Activated CD8-positive, alpha-beta memory T cell treated with anti-CD3 and anti-CD28 coated beads, Interleukin-2, amount 10 ng/mL, durations not matched to agents 7 days and 5 days (primary cell): ENCODE measurements at regions of chr17 and their contacts with region 1.

Region 1: DNA sequence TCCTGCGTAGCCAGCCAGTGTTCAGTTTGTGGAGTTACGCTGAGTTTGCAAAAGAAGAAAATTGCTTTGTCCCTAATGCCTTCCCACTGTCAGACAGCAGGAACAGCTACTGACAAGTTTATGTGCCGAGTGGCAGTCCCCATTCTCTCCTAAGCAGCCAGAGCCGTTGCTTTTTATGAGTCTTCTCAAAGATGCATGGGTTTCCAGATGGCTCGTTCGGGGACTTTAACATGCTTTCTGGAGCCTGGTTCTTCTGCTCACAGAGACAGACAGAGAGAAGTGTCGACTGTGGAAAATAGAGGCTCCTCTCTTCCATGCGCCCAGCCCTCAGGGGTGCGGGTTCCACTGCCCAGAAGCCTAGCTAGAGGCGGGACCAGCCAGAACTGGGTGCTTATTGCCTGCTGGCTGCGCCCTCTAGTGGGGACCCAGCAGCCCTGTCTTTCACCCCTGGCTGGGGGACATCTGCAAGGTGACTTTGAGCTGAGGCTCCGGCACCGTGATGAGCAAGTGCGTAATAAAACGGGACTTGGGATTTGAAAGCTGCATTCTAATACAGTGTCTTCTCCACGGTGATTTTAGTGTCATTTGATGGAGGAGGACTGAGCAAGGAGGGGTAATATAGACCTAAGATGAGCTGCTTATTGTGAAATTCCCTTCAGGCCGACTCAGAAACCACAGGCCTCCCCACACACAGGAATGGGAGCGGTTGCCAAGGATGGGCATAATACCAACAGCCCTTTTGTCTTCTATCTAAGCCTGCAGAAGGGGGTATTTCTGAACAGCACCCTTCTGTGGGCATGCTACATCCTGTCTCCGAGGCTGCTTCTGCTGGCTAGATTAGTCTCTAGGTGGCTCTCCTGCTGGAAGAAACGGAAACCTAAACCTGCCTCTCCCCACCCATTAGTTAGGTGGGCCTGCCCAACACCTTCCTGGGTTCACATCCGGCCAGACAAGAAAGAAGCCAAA is 73.1 kb downstream of the CCDC182 start:
- DNase-seq: peak; percentile 86
- ATAC-seq: peak; percentile 93
- H3K4me3 Mint-ChIP-seq: peak overlapping the region; percentile 50
- H3K27ac Mint-ChIP-seq: peak overlapping the region; percentile 96
- H3K4me1 Mint-ChIP-seq: peaks cover 47% of the 10 kb centered on the region
- H3K27me3 Mint-ChIP-seq: no peaks in the 10 kb centered on the region

Region 2: GRCh38 chr17:57604771-57605674 is 66.9 kb before region 1 on chr17:
- CTCF ChIA-PET with region 1: interaction called, 108 read pairs
- DNase-seq: peak; percentile 54
- ATAC-seq: peak; percentile 29
- H3K4me3 Mint-ChIP-seq: peak overlapping the region; percentile 55
- H3K27ac Mint-ChIP-seq: peak overlapping the region; percentile 98
- H3K4me1 Mint-ChIP-seq: peaks cover 81% of the 10 kb centered on the region
- H3K27me3 Mint-ChIP-seq: no peaks in the 10 kb centered on the region

Region 3: DNA sequence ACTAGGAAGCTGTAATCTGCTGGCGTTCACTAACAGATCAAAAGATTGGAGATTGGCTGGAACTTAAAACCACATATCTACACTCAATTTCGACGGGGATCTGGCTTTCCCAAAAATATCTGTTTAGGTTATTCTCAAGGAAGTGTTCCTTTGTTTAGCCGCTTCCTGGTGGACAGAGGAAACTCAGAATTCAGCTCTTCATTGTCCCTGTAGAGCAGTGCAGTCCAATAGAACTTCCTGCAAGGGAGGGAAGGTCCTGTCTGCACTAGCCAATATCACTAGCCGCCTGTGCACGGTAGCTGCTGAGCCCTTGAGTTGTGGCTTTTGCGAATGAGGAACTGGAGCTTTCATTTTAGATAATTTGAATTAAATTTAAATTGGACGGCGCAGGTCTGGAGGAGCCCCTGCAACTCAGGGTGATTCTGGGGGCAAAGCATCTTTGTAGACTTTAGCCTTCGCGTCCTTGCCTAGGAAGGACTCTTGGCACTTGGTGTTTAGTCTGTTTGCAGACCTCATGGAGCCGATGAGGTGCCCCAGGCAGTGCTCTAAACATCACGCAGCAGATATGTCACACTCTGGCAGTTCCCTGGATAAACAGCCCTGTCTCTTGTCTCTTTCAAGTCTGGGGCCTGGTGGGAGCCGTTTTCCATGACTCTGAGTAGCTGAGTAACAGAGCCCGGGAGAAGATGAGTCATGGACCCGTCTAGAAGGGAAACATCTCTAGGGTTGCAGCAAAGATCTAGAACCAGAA is 49.1 kb before region 1 on chr17:
- CTCF ChIA-PET with region 1: interaction called, 13 read pairs
- DNase-seq: no peak
- ATAC-seq: no peak
- H3K4me3 Mint-ChIP-seq: no peak overlapping the region
- H3K27ac Mint-ChIP-seq: no peak overlapping the region
- H3K4me1 Mint-ChIP-seq: peaks cover 19% of the 10 kb centered on the region
- H3K27me3 Mint-ChIP-seq: no peaks in the 10 kb centered on the region

Region 4: DNA sequence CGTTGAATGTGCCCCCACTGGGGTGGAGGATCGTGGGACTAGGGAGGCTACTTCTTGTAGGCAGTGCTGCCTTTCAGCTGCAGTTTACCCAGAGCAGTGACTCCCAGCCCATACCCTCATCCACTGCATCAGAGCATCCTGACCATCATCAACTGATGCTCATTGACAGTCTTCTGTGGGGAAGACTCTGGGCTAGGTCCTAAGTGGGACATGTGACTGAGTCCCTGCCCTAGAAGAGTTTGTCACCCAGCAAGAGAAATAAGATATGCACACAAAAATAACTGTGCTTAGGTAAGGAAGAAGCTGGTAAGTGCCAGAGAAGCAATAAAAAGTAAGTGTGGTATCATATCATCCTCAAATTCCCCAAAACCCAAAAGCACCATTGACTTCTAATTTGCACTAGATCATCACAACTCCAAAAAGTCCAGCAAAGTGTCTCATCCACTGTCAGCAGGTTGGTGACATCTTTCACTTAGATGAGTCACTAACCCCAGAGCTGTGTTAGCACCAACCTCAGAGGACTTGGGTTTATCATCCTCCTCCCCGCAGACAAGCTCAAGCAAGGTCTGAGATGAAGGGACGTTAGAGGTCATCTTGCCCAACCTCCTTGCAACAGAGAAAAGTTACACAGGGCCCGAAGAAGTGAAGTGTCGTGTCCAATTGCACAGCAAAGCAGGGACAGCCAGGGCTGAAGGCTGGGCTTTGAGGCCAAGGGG is 25.8 kb before region 1 on chr17:
- CTCF ChIA-PET with region 1: interaction called, 17 read pairs
- DNase-seq: peak; percentile 58
- ATAC-seq: peak; percentile 94
- H3K4me3 Mint-ChIP-seq: no peak overlapping the region
- H3K27ac Mint-ChIP-seq: peak overlapping the region; percentile 80
- H3K4me1 Mint-ChIP-seq: peaks cover 14% of the 10 kb centered on the region
- H3K27me3 Mint-ChIP-seq: no peaks in the 10 kb centered on the region

Region 5: GRCh38 chr17:57823469-57824401 is 151.8 kb after region 1 on chr17:
- CTCF ChIA-PET with region 1: no interaction called
- DNase-seq: no peak
- ATAC-seq: no peak
- H3K4me3 Mint-ChIP-seq: no peak overlapping the region
- H3K27ac Mint-ChIP-seq: no peak overlapping the region
- H3K4me1 Mint-ChIP-seq: no peaks in the 10 kb centered on the region
- H3K27me3 Mint-ChIP-seq: peaks cover 9% of the 10 kb centered on the region